ENCODE measurements at regions of chr5 and their contacts with region 1.

Region 1: GRCh38 chr5:153860195-153860886 is 178.4 kb downstream of the FAM114A2 start:
- DNase-seq: no peak
- ATAC-seq: no peak
- H3K4me3 ChIP-seq: no peak overlapping the region
- H3K27ac ChIP-seq: no peak overlapping the region
- H3K4me1 ChIP-seq: no peaks in the 10 kb centered on the region
- H3K27me3 ChIP-seq: no peaks in the 10 kb centered on the region; the same call in 1 of the 2 replicates
- CTCF ChIP-seq: no peak
- POLR2A ChIP-seq: no peak
- RAD21 ChIP-seq: no peak

Region 2: GRCh38 chr5:153816870-153817269 is 43.5 kb before region 1 on chr5:
- CTCF ChIA-PET with region 1: no interaction called
- POLR2A ChIA-PET with region 1: no interaction called
- dilution Hi-C with region 1: no loop called
- in situ Hi-C with region 1: no loop called
- intact Hi-C with region 1: loop called (anchors 1 kb)
- DNase-seq: no peak
- ATAC-seq: no peak
- H3K4me3 ChIP-seq: no peak overlapping the region
- H3K27ac ChIP-seq: no peak overlapping the region
- H3K4me1 ChIP-seq: no peaks in the 10 kb centered on the region
- H3K27me3 ChIP-seq: no peaks in the 10 kb centered on the region
- CTCF ChIP-seq: no peak
- POLR2A ChIP-seq: no peak
- RAD21 ChIP-seq: no peak